ENCODE measurements at regions of chr4 and their contacts with region 1.

Region 1: DNA sequence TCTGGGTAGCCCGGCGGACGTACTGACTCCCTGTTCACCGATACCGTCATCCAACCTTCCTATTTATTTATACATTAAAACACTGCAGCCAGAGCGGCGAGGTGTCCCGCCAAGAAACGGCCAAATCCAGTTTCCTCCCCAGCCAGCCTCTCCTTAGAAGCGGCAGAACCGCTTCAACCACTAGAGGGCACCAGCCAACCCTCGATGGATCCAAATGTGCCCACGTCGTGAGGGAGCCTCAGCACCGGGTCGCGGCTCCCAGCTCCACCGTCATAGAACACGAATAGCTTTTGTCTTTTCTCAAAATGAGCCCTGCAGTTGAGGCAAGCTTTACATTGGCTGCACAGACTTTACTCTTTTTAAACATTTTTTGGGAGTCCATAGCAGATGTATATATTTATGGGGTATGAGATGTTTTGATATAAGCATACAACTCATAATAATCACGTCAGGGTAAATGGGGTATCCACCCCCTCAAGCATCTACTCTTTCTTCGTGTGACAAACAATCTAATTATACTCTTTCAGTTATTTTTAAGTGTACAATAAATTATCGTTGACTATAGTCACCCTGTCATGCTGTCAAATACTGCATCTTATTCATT is 13.0 kb upstream of the HELT start:
- DNase-seq: peak; percentile 77 to 88 (median 78)
- ATAC-seq: peak; percentile 97
- H3K4me3 ChIP-seq: no peak overlapping the region
- H3K27ac ChIP-seq: no peak overlapping the region
- H3K4me1 ChIP-seq: peaks cover 0 to 9% of the 10 kb centered on the region in 2 experiments; a peak in 2 of 5 replicates
- H3K27me3 ChIP-seq: peaks cover 38 to 70% of the 10 kb centered on the region in 2 experiments
- CTCF ChIP-seq: peak; percentile 87 to 93 (median 87)
- EP300 ChIP-seq: no peak
- POLR2A ChIP-seq: no peak
- RAD21 ChIP-seq: peak; percentile 76 to 82

Region 2: GRCh38 chr4:184649026-184649970 is 356.0 kb before region 1 on chr4 and contains the starts of genes CASP3 and PRIMPOL:
- CTCF ChIA-PET with region 1: no interaction called
- POLR2A ChIA-PET with region 1: no interaction called
- in situ Hi-C with region 1: no loop called
- intact Hi-C with region 1: loop called (anchors 10 kb)
- DNase-seq: peak; percentile 91 to 98 (median 92)
- ATAC-seq: peak; percentile 92
- H3K4me3 ChIP-seq: peak within 1 kb of the TSS; percentile 96
- H3K27ac ChIP-seq: peak within 1 kb of the TSS; percentile 89
- H3K4me1 ChIP-seq: peaks cover 17 to 19% of the 10 kb centered on the region in 2 experiments
- H3K27me3 ChIP-seq: no peaks in the 10 kb centered on the region
- CTCF ChIP-seq: peak in 2 of 3 experiments; percentile 59 to 64; a peak in 4 of 6 replicates
- EP300 ChIP-seq: no peak
- POLR2A ChIP-seq: peak; percentile 84
- RAD21 ChIP-seq: peak; percentile 47
- polyA plus RNA-seq, gene CASP3: 17.6 to 39.3 TPM
- polyA plus RNA-seq, gene PRIMPOL: 11.0 to 14.2 TPM

Region 3: DNA sequence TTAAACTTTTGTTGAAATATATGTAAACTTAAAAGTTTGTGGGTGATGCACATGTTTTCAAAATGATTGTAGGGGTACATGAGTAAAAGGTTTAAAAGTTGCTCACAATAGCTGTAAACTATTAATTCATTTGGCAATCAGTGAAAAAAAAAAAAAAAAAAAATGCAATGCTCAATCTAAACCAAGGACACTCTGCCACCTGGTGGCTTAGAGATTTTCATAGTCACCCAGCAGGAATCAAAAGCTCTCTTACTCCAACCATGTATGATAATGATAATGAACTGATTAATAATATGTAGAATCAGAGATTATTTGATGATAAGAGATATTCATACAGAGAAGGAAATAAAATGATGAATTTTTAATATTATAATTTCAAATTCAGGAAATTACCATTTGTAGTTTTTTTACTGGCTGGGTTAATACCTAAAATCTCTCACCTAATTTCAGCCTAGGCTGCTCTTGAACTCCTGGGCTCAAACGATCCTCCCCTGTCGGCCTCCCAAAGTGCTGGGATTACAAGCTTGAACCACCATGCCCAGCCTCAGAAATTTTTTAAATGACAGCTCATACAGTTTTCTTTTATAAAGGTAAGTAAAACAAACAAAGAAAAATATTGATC is 90.8 kb after region 1 on chr4:
- CTCF ChIA-PET with region 1: interaction called, 7 read pairs
- POLR2A ChIA-PET with region 1: interaction called, 3 read pairs
- in situ Hi-C with region 1: no loop called
- intact Hi-C with region 1: loop called (anchors 1 kb)
- DNase-seq: peak in 3 of 4 experiments; percentile 21 to 59 (median 24)
- ATAC-seq: no peak
- H3K4me3 ChIP-seq: no peak overlapping the region
- H3K27ac ChIP-seq: no peak overlapping the region
- H3K4me1 ChIP-seq: peaks cover 0 to 3% of the 10 kb centered on the region in 2 experiments; a peak in 2 of 5 replicates
- H3K27me3 ChIP-seq: peaks cover 15 to 22% of the 10 kb centered on the region in 2 experiments
- CTCF ChIP-seq: peak; percentile 36 to 76 (median 48); a peak in 4 of 6 replicates
- EP300 ChIP-seq: no peak
- POLR2A ChIP-seq: no peak
- RAD21 ChIP-seq: peak; percentile 70 to 74

Region 4: GRCh38 chr4:185112104-185112503 is 106.8 kb after region 1 on chr4:
- CTCF ChIA-PET with region 1: no interaction called
- POLR2A ChIA-PET with region 1: no interaction called
- in situ Hi-C with region 1: no loop called
- intact Hi-C with region 1: no loop called
- DNase-seq: peak in 2 of 4 experiments; percentile 49 to 65
- ATAC-seq: peak; percentile 60
- H3K4me3 ChIP-seq: no peak overlapping the region
- H3K27ac ChIP-seq: no peak overlapping the region
- H3K4me1 ChIP-seq: peaks cover 8 to 14% of the 10 kb centered on the region in 2 experiments; a peak in 4 of 5 replicates
- H3K27me3 ChIP-seq: no peaks in the 10 kb centered on the region
- CTCF ChIP-seq: no peak
- EP300 ChIP-seq: no peak
- POLR2A ChIP-seq: no peak
- RAD21 ChIP-seq: no peak

Region 5: GRCh38 chr4:185122681-185123345 is 117.5 kb after region 1 on chr4:
- CTCF ChIA-PET with region 1: no interaction called
- POLR2A ChIA-PET with region 1: no interaction called
- in situ Hi-C with region 1: no loop called
- intact Hi-C with region 1: no loop called
- DNase-seq: no peak
- ATAC-seq: no peak
- H3K4me3 ChIP-seq: no peak overlapping the region
- H3K27ac ChIP-seq: no peak overlapping the region
- H3K4me1 ChIP-seq: peaks cover 0 to 17% of the 10 kb centered on the region in 2 experiments; a peak in 3 of 5 replicates
- H3K27me3 ChIP-seq: no peaks in the 10 kb centered on the region
- CTCF ChIP-seq: no peak
- EP300 ChIP-seq: no peak
- POLR2A ChIP-seq: no peak
- RAD21 ChIP-seq: no peak

Region 6: DNA sequence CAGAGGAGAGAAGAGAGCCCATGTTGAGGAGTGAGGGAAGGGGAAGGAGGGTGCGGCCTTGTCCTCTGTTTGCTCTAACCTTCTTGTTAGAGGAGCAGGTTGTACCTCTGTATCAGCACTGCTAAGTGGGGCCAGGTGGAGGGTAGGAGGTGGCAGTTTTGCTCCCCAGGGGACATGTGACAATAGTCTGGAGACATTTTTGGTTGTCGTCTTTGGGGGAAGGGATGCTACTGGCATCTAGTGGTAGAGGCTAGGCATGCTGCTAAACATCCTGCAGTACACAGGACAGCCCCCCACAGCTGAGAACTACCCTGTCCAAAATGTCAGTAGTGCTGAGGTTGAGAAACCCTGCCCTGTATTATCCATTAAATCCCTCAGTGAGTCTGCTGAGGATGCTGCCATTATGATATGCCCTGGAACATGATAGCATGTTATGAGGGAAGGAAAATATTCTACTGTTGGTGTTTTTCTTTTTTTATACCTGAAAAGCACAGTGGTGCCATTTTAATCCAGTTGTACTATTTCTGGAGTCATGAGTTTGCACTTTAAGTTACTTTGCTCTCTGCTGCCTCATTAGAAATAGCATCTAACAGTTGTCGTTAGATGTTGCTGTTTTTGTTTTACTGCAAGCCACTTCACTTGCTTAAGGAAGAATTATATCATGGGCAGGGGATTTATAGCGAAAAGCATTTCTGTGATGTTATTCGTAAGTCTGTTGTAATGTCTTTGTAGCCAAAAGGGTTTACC is 299.8 kb after region 1 on chr4:
- CTCF ChIA-PET with region 1: interaction called, 4 read pairs
- POLR2A ChIA-PET with region 1: no interaction called
- in situ Hi-C with region 1: no loop called
- intact Hi-C with region 1: loop called (anchors 10 kb)
- DNase-seq: peak in 1 of 4 experiments; percentile 52
- ATAC-seq: peak; percentile 92
- H3K4me3 ChIP-seq: no peak overlapping the region
- H3K27ac ChIP-seq: no peak overlapping the region
- H3K4me1 ChIP-seq: no peaks in the 10 kb centered on the region
- H3K27me3 ChIP-seq: no peaks in the 10 kb centered on the region
- CTCF ChIP-seq: peak; percentile 61 to 66 (median 66)
- EP300 ChIP-seq: no peak
- POLR2A ChIP-seq: no peak
- RAD21 ChIP-seq: peak; percentile 55 to 71

Measured in K562 (cell line).